ENCODE measurements at regions of chr2 and their contacts with region 1.

Region 1: GRCh38 chr2:86764661-86765307 is 25.9 kb downstream of the CD8A start:
- DNase-seq: peak; percentile 60
- CTCF ChIP-seq: peak; percentile 59

Region 2: GRCh38 chr2:86518481-86518880 is 246.3 kb before region 1 on chr2:
- CTCF ChIA-PET with region 1: no interaction called
- POLR2A ChIA-PET with region 1: no interaction called
- DNase-seq: no peak
- CTCF ChIP-seq: no peak

Region 3: DNA sequence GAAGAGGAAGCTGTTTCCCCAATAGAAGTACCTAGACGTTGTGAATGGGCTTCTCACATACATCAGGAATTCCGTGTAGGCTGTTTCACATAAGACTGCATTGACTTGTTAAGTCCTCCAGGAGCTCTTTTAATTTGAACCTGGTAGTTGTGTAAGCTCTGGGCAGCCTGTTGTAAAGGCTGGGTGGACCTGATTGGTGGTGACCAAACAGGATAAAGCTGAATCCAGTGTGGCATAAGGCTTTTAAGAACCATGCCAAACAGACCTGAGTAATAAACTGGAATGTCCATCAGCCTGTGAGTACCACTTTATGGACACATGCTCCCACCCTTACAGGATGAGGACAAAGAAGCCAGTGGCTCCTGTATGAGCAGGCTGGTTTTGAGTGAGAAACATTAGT is 20.6 kb before region 1 on chr2:
- CTCF ChIA-PET with region 1: interaction called, 11 read pairs
- POLR2A ChIA-PET with region 1: no interaction called
- DNase-seq: no peak
- CTCF ChIP-seq: no peak

Region 4: GRCh38 chr2:86750240-86750839 is 14.4 kb before region 1 on chr2:
- CTCF ChIA-PET with region 1: interaction called, 57 read pairs
- POLR2A ChIA-PET with region 1: no interaction called
- DNase-seq: no peak
- CTCF ChIP-seq: no peak

Region 5: DNA sequence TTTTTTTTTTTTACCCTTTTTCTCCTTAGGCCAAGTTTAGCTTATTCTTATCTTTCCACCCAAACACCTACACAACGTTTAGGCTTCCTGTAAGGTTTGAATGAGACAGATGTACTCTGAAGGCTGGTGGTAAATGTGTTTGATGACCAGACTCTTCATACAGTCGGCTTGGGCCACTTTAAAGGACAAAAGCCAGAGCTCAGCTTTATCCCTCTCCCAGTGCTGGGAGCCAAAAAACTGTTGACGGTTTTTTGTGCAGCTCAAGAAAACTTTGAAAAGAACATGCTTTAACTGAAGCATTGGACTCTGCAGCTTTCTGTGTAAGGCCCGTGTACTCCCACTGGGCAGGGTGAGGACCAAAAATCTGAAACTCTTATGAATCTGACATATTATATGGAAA is 10.6 kb after region 1 on chr2:
- CTCF ChIA-PET with region 1: interaction called, 17 read pairs
- POLR2A ChIA-PET with region 1: interaction called, 11 read pairs
- DNase-seq: no peak
- CTCF ChIP-seq: no peak

Region 6: DNA sequence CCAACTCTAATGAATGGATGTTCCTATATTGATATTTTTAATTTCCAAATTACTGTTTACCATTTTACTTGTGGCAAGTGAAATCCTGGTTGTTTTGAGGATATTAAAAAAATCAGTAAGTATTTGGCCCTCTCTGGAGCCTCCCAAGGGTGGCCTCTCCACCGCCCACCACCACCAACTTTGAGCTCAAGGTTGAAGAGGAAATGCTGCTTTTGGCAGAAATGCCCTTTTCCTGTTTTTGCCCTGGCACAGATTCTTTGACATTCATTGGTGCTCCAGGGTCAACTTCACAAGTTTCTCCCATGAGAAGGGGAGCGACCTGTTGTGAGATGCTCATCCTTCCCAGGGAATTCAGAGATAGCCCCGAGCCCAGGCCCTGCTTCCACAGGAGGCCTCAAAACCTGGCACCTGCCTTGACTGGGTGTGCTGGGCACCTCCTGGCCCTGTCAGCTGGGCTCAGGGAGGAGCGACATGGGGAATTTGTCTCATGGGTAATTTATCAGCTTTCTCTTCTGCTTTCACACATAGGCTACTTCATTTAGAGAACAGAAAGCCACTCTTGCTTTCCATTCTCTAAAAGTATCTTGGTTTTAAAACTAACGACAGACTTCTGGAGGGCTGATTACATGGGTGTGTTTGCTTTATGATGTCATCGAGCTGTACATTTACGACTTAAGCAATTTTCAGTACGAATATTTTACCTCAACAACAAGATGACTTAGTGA is 19.0 kb after region 1 on chr2:
- CTCF ChIA-PET with region 1: interaction called, 15 read pairs
- POLR2A ChIA-PET with region 1: no interaction called
- DNase-seq: peak; percentile 81
- CTCF ChIP-seq: no peak

Region 7: GRCh38 chr2:88170472-88170892 is 1405.7 kb after region 1 on chr2:
- CTCF ChIA-PET with region 1: no interaction called
- POLR2A ChIA-PET with region 1: no interaction called
- DNase-seq: no peak
- CTCF ChIP-seq: no peak